CD4-positive, alpha-beta memory T cell (primary cell): ENCODE measurements at regions of chr7 and their contacts with region 1.

Region 1: DNA sequence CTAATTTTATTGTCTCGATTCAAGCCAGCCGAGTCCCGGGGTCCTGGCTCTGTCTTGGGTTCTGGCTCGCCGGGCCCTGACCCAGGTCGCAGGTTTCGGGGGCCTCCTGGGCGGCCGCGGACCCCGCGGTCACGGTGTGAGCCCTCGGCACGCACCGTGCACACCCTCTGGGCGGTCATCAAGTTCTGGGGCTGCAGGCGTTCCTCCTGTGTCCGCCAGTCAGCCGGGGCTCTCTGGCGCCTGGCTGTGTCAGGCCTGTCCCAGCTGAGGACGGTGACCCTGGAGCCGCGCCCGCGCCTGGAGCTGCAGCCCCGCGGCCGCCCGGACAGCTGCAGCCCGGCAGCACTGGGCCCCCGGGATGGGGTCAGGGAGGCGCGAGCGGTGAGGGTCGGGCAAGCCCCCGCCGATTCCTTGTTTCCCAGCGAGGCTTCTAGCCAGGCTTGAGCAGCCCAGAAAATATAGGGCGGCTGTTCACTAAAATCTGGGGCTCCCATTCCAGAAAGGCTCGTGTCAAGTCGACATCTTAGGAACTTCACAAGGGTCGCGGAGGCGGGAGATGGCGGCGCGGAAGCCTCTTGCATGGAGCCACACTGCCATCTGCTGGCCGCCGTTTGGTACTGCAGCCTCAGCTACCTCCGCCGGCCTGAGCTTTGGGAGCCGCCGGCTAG is 4.2 kb upstream of the HOXA7 start:
- DNase-seq: peak; percentile 77 to 84 (median 78)
- H3K4me3 ChIP-seq: peak overlapping the region; percentile 61 to 79
- H3K4me3 Mint-ChIP-seq: peak overlapping the region; percentile 77 to 87 (median 81)
- H3K27ac ChIP-seq: no peak overlapping the region
- H3K27ac Mint-ChIP-seq: peak overlapping the region in 1 of 7 donors; percentile 88
- H3K4me1 ChIP-seq: peaks cover 38% of the 10 kb centered on the region
- H3K4me1 Mint-ChIP-seq: peaks cover 18 to 52% (median 30%) of the 10 kb centered on the region in 4 donors
- H3K27me3 ChIP-seq: peaks cover 80% of the 10 kb centered on the region
- H3K27me3 Mint-ChIP-seq: peaks cover 51 to 68% of the 10 kb centered on the region in 2 donors

Region 2: DNA sequence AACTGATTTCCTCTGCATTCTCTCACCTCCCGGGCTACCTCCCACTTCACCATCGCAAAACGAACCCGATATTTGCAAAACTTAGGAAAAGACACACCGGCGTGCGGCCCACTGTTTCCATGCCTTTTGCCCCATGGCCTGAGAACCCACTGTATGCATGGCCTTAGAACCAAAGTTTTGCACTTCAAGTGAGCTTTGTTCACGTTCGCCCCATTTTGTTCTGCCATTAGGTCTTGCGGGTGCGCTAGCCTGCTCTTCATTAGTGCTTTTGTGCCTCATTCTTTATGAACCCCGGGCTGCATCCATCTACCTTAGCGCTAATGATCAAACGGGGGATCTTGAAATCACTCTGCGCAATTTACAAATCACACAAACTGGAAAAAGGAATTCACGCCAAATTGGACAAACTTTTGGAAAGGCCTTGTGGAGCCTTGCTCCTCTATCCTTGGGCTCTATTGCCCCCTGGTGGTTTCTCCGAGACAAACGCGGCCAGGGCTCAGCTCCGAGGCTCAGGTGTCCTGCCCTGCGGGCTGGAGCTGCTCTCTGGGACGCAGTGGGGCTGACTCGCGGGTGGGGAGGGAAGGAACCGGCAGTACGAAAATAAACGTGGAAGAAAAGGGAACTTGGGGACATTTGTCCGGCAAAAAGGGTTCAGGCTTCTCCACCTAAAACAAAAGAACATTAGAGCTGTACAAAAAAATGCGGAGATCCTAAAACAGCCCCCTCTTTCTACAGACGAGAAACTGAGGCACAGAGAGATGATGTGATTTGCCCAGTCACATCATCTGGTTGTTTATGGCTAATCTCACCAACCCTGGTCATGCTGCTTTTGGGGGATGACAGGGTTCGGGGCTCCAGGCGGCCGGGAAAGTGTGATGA is 1309.1 kb before region 1 on chr7:
- CTCF ChIA-PET with region 1: interaction called, 3 read pairs
- POLR2A ChIA-PET with region 1: no interaction called
- intact Hi-C with region 1: loop called (anchors 5 kb)
- DNase-seq: peak; percentile 39 to 55 (median 45)
- H3K4me3 ChIP-seq: no peak overlapping the region
- H3K4me3 Mint-ChIP-seq: peak overlapping the region; percentile 6 to 91 (median 78)
- H3K27ac ChIP-seq: no peak overlapping the region
- H3K27ac Mint-ChIP-seq: peak overlapping the region in 5 of 7 donors; percentile 58 to 91 (median 89)
- H3K4me1 ChIP-seq: peaks cover 20% of the 10 kb centered on the region
- H3K4me1 Mint-ChIP-seq: peaks cover 5 to 30% (median 11%) of the 10 kb centered on the region in 4 donors
- H3K27me3 ChIP-seq: peaks cover 59% of the 10 kb centered on the region
- H3K27me3 Mint-ChIP-seq: peaks cover 49 to 53% of the 10 kb centered on the region in 2 donors

Region 3: GRCh38 chr7:26200444-26201246 is 960.0 kb before region 1 on chr7 and contains the start of gene HNRNPA2B1:
- CTCF ChIA-PET with region 1: no interaction called
- POLR2A ChIA-PET with region 1: no interaction called
- intact Hi-C with region 1: loop called (anchors 2 kb)
- DNase-seq: peak; percentile 98 to 100 (median 99)
- H3K4me3 ChIP-seq: peak within 1 kb of the TSS; percentile 80 to 89
- H3K4me3 Mint-ChIP-seq: peak within 1 kb of the TSS; percentile 99 to 100 (median 100)
- H3K27ac ChIP-seq: peak within 1 kb of the TSS; percentile 98
- H3K27ac Mint-ChIP-seq: peak within 1 kb of the TSS; percentile 99 to 100 (median 100)
- H3K4me1 ChIP-seq: peaks cover 56% of the 10 kb centered on the region
- H3K4me1 Mint-ChIP-seq: peaks cover 38 to 76% (median 46%) of the 10 kb centered on the region in 4 donors
- H3K27me3 ChIP-seq: no peaks in the 10 kb centered on the region
- H3K27me3 Mint-ChIP-seq: peaks cover 0 to 4% of the 10 kb centered on the region in 2 donors
- total RNA-seq, gene HNRNPA2B1: 450 to 466 TPM

Region 4: DNA sequence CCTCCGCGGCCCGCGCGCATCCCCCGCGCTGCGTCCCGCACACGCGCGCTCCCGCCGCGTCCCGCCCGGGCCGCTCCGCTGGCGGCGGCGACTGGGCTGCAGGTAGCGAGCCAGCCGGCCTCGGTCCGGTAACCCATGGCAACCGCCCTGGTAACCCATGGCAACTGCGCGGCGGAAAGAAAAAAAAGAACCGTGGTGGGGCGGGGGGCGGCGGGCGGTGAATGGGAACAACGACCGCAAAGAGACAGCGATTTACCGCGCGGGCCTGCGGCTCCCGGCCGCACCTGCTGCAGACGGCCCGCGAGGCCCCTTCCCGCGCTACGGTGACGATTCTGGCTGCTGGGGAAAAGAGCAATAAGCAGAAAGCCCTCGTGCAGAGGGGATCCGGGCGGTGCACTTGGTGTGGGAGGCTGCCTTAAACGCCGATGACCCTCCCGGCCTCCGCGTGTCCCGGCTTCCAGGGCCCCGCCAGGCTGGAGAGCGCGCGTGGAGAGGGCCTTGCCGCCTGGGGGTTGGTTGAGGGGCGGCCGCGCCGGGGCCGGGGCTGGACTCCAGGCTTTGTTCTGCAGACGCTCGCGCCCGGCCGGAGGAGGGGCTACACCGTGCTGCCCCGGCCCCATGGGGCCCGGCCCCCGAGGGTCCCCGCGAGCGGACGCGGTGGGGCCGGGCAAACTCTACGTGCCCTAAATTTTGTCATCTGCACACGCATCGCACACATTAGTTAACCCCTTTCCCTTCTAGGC is 784.3 kb before region 1 on chr7:
- CTCF ChIA-PET with region 1: interaction called, 15 read pairs
- POLR2A ChIA-PET with region 1: interaction called, 3 read pairs
- intact Hi-C with region 1: no loop called
- DNase-seq: peak; percentile 22 to 43 (median 24)
- H3K4me3 ChIP-seq: peak overlapping the region; percentile 26 to 56
- H3K4me3 Mint-ChIP-seq: peak overlapping the region; percentile 83 to 95 (median 88)
- H3K27ac ChIP-seq: no peak overlapping the region
- H3K27ac Mint-ChIP-seq: peak overlapping the region in 2 of 7 donors; percentile 24 to 75
- H3K4me1 ChIP-seq: peaks cover 8% of the 10 kb centered on the region
- H3K4me1 Mint-ChIP-seq: peaks cover 0 to 7% (median 5%) of the 10 kb centered on the region in 4 donors
- H3K27me3 ChIP-seq: peaks cover 11% of the 10 kb centered on the region
- H3K27me3 Mint-ChIP-seq: peaks cover 13 to 23% of the 10 kb centered on the region in 2 donors

Region 5: GRCh38 chr7:26691886-26692285 is 468.8 kb before region 1 on chr7:
- CTCF ChIA-PET with region 1: interaction called, 10 read pairs
- POLR2A ChIA-PET with region 1: no interaction called
- intact Hi-C with region 1: no loop called
- DNase-seq: no peak
- H3K4me3 ChIP-seq: no peak overlapping the region
- H3K4me3 Mint-ChIP-seq: no peak overlapping the region
- H3K27ac ChIP-seq: no peak overlapping the region
- H3K27ac Mint-ChIP-seq: no peak overlapping the region
- H3K4me1 ChIP-seq: no peaks in the 10 kb centered on the region
- H3K4me1 Mint-ChIP-seq: peaks cover 0 to 4% (median 0%) of the 10 kb centered on the region in 4 donors
- H3K27me3 ChIP-seq: no peaks in the 10 kb centered on the region
- H3K27me3 Mint-ChIP-seq: peaks cover 8 to 9% of the 10 kb centered on the region in 2 donors

Region 6: GRCh38 chr7:27172823-27173510 is 12.3 kb after region 1 on chr7:
- CTCF ChIA-PET with region 1: interaction called, 10 read pairs
- POLR2A ChIA-PET with region 1: interaction called, 6 read pairs
- intact Hi-C with region 1: no loop called
- DNase-seq: no peak
- H3K4me3 ChIP-seq: peak overlapping the region in 1 of 2 donors; percentile 32
- H3K4me3 Mint-ChIP-seq: peak overlapping the region in 7 of 8 donors; percentile 39 to 85 (median 65)
- H3K27ac ChIP-seq: no peak overlapping the region
- H3K27ac Mint-ChIP-seq: peak overlapping the region in 2 of 7 donors; percentile 83 to 84
- H3K4me1 ChIP-seq: peaks cover 37% of the 10 kb centered on the region
- H3K4me1 Mint-ChIP-seq: peaks cover 14 to 39% (median 21%) of the 10 kb centered on the region in 4 donors
- H3K27me3 ChIP-seq: peaks cover 69% of the 10 kb centered on the region
- H3K27me3 Mint-ChIP-seq: peaks cover 60 to 66% of the 10 kb centered on the region in 2 donors